Activated CD8-positive, alpha-beta T cell treated with anti-CD3 and anti-CD28 coated beads, Interleukin-2, amount 10 ng/mL, durations not matched to agents 7 days and 5 days (primary cell): ENCODE measurements at regions of chr21 and their contacts with region 1.

Region 1: DNA sequence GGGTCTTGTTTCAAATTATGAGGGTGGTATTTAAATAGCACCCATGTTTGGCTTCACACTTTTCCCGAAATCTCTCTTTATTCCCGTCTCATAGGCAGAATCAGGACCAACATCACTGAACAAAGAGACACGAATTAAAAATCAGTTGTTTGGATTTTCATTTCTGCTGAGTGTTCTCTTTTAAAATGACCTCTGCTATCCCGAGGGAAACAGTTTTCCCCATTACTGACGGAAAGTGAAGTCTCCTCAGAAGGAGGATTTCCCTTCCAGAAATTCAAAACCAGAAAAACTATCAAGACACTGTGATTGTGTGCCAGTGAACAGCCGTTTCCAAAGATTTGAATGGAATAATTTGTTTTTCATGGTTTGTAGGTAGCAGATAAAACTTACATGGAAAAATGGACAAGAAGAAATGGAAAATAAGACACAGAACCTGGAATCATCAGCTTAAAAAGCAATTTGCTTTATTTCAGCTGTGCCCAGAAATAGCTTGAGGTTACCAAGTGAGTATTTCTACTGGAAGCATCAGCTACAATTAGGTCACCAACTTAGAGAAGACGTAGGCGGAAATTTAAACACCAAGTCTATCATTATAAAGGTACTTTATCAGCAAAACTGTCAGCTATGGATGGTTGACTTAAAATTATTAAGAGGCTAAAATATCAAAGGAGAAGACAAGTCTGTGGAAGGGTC is 68.5 kb downstream of the RUNX1 start:
- DNase-seq: no peak
- ATAC-seq: no peak
- H3K4me3 Mint-ChIP-seq: no peak overlapping the region
- H3K27ac Mint-ChIP-seq: no peak overlapping the region
- H3K4me1 Mint-ChIP-seq: peaks cover 41% of the 10 kb centered on the region
- H3K27me3 Mint-ChIP-seq: peaks cover 31% of the 10 kb centered on the region

Region 2: GRCh38 chr21:34946916-34947534 is 33.5 kb before region 1 on chr21:
- CTCF ChIA-PET with region 1: interaction called, 16 read pairs
- POLR2A ChIA-PET with region 1: no interaction called
- DNase-seq: no peak
- ATAC-seq: no peak
- H3K4me3 Mint-ChIP-seq: no peak overlapping the region
- H3K27ac Mint-ChIP-seq: no peak overlapping the region
- H3K4me1 Mint-ChIP-seq: peaks cover 40% of the 10 kb centered on the region
- H3K27me3 Mint-ChIP-seq: peaks cover under 1% of the 10 kb centered on the region